PC-9 (cell line): ENCODE measurements at regions of chr11 and their contacts with region 1.

Region 1: GRCh38 chr11:96464700-96465307 is 75.0 kb downstream of the JRKL start:
- DNase-seq: peak in 1 of 2 experiments; percentile 74
- H3K4me3 ChIP-seq: peak overlapping the region; percentile 13; the same call in 1 of the 2 replicates
- H3K27ac ChIP-seq: no peak overlapping the region
- H3K4me1 ChIP-seq: peaks cover 7% of the 10 kb centered on the region
- H3K27me3 ChIP-seq: no peaks in the 10 kb centered on the region; the same call in 1 of the 2 replicates
- CTCF ChIP-seq: peak; percentile 91

Region 2: DNA sequence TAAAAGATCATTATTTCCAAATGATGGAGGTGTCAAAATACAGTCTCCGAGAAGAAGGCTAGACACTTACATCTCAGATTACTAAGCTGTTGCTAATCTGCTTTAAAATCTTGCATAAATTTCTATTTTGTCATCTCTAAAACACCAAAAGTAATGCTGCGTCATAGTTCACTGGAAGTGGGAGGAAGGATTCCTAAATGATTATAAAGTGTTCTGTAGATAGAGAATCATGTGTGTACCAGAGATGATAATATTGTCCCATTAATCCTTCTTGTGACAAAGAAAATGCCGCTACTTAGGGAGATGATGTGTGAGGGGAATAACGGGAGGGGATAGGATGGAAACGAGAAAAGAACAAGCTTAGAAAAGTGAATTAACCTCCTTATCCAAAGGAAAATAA is 193.6 kb after region 1 on chr11:
- CTCF ChIA-PET with region 1: no interaction called
- POLR2A ChIA-PET with region 1: no interaction called
- intact Hi-C with region 1: no loop called
- DNase-seq: no peak
- H3K4me3 ChIP-seq: no peak overlapping the region
- H3K27ac ChIP-seq: no peak overlapping the region
- H3K4me1 ChIP-seq: no peaks in the 10 kb centered on the region
- H3K27me3 ChIP-seq: no peaks in the 10 kb centered on the region
- CTCF ChIP-seq: no peak

Region 3: GRCh38 chr11:96694338-96694737 is 229.5 kb after region 1 on chr11:
- CTCF ChIA-PET with region 1: no interaction called
- POLR2A ChIA-PET with region 1: no interaction called
- intact Hi-C with region 1: loop called (anchors 10 kb)
- DNase-seq: no peak
- H3K4me3 ChIP-seq: no peak overlapping the region
- H3K27ac ChIP-seq: no peak overlapping the region
- H3K4me1 ChIP-seq: no peaks in the 10 kb centered on the region
- H3K27me3 ChIP-seq: no peaks in the 10 kb centered on the region
- CTCF ChIP-seq: no peak

Region 4: DNA sequence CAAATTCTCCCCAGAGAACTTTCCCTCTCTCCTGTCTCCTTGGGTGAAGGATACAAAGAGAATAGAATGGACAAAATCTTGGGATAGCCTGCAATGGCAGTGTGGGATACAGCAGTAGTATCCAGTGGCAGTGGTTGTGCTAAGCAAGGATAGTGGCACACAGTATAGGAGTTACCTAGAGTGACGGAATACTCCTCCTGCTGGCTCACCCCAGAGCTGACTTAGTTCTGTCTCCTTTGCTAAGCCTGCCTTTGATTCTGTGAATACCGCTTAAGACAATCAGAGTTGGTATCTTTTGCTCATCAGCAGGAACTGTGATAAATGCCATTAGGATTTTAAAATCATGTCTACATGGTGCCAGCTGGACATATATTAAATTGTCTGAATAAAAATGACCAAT is 329.3 kb after region 1 on chr11:
- CTCF ChIA-PET with region 1: no interaction called
- POLR2A ChIA-PET with region 1: no interaction called
- intact Hi-C with region 1: no loop called
- DNase-seq: no peak
- H3K4me3 ChIP-seq: no peak overlapping the region
- H3K27ac ChIP-seq: no peak overlapping the region
- H3K4me1 ChIP-seq: no peaks in the 10 kb centered on the region
- H3K27me3 ChIP-seq: no peaks in the 10 kb centered on the region
- CTCF ChIP-seq: no peak

Region 5: GRCh38 chr11:97140885-97141494 is 676.2 kb after region 1 on chr11:
- CTCF ChIA-PET with region 1: interaction called, 9 read pairs
- POLR2A ChIA-PET with region 1: no interaction called
- intact Hi-C with region 1: loop called (anchors 1 kb)
- DNase-seq: no peak
- H3K4me3 ChIP-seq: no peak overlapping the region
- H3K27ac ChIP-seq: no peak overlapping the region
- H3K4me1 ChIP-seq: no peaks in the 10 kb centered on the region
- H3K27me3 ChIP-seq: no peaks in the 10 kb centered on the region
- CTCF ChIP-seq: peak; percentile 87